GM18951 (cell line): ENCODE measurements at regions of chr6 and their contacts with region 1.

Region 1: DNA sequence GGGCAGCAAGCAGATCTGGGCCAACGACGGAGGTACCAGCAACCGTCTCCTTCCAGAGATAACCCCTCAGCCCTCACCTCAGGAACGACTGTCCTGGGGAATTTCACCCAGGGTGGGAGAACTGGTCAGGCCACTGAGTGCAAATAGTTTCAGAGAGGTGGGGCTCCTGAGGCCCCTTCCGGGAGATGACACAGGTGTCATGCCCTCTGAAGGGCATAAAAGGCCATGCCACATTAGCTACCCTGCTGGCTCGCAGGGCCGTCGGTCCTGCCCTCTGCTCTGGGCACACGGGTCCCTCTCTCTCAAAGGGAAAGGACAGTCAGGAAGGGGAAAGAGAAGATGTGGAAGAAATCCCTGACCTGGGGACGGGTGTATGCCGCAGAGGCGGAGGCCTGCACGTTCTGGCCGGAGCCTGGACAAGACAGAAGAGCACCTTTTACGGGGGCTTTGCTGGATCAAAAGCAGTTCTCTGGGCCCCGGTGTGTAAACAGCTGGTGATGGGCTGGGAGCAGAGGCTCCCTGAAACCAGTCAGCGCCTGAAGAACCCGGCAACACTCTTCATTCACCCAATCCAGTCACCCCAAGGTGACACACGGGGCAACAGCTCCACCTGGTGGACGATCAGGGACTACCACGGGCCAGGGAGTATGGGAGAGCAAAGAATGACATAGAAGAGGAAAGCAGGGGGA is 6.4 kb upstream of the TAF8 start:
- POLR2A ChIP-seq: no peak

Region 2: GRCh38 chr6:41286544-41287346 is 757.2 kb before region 1 on chr6 and contains the start of gene TREM1:
- in situ Hi-C with region 1: no loop called
- POLR2A ChIP-seq: no peak

Region 3: DNA sequence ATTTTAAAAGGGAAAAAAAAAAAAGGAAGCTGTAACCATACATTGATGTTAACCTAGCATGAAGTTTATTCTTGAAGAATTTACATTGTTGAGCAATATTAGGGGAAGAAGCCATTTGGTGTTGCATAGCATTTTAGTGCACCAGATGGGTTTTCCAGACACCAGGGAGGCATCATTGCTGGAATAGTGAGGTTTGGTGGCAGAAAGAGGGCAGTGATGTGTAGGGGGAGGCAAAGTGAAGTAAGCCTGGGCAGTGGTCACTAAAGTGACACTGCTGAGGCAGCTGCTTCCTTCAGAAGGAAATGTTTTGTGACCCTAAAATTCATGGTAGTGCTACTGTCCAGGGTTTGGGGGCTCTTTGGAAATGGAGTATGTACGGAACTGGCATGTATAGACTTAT is 253.9 kb before region 1 on chr6:
- in situ Hi-C with region 1: loop called (anchors 10 kb)
- POLR2A ChIP-seq: no peak

Region 4: GRCh38 chr6:41846666-41847237 is 197.2 kb before region 1 on chr6:
- in situ Hi-C with region 1: loop called (anchors 10 kb)
- POLR2A ChIP-seq: no peak

Region 5: DNA sequence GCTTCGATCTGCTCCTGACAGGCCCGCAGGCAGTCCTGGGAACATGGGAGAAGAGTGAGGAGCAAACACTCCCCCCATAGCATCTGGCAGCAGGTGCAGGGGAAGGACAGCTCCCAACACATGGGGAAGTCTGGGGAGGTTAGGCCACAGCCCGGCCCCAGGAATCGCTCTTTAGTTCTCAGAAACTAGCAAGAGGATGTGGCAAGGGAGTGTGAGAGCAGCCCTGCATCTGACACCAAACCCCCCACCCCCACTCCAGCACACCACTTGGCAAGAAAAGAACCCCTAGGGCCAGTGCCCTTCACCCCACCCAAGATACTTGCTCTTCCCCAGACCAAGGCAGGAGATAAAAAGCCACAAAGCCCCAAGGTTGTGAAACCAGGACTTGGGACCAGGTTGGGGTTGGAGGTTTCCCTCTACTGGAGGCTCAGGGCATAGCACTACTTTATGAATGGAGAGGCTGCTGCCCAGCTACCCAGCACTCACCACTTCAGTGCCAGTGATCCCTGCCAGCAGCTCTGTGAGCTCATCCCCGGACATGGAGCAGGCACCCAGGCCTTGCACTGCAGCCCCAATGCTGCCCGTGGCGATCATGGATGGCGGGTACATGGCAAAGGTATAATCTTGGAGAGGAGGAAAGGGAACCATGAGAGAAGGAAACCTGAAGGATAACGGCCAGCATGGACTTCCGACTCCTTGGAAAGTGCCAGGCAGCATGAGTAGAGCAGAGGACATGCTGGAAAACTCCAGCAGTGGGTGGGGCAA is 107.7 kb before region 1 on chr6:
- in situ Hi-C with region 1: loop called (anchors 10 kb)
- POLR2A ChIP-seq: peak; percentile 29